SK-N-SH (cell line): ENCODE measurements at regions of chr20 and their contacts with region 1.

Region 1: DNA sequence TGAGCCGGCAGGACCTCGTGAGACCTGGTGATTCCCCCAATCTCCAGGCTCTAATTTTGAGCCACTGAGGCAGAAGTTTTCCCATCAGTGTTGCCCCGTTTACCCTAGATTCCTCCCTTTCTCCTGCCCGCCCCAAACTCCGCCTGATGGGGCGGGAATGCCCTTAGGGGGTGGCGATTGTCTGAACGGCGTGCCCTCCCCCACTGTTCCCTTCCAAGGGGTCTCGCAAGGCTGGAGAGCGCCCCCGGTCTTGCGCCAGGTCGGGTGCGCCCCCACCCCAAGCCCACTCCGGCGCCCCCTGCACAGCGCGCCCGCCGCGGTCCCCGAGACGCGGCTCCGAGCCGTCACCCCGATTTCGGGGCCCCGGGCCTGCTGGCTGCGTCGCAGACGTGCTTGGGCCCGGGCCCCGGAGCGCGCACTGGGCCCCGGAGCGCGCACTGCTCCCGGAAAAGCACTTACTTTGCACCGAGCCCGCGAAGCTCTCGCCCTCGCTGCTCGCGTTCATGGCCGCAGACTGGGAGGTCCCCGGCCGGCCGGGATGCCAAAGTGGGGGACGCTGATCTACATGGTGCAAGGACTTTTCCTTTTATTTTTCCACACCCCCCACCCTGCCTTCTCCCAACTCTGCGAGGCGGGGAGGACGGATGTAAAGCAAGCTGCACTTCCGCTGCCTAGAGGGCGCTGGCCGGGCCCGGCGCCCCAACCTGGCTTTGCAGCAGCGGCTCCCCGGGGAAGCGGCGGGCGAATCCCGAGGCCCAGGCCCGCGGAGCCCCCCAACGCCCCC is at the start of gene ZFP64:
- DNase-seq: peak; percentile 91
- H3K4me3 ChIP-seq: peak within 1 kb of the TSS; percentile 83 to 95
- H3K27ac ChIP-seq: peak within 1 kb of the TSS; percentile 78 to 96
- H3K4me1 ChIP-seq: peaks cover 5% of the 10 kb centered on the region in 2 experiments; a peak in 3 of 4 replicates
- H3K27me3 ChIP-seq: no peaks in the 10 kb centered on the region
- CTCF ChIP-seq: peak; percentile 70
- EP300 ChIP-seq: no peak
- RAD21 ChIP-seq: no peak
- polyA plus RNA-seq, gene ZFP64: 12.4 and 12.8 TPM in 2 replicates

Region 2: GRCh38 chr20:52172392-52173047 is 18.8 kb before region 1 on chr20:
- CTCF ChIA-PET with region 1: interaction called, 12 read pairs
- POLR2A ChIA-PET with region 1: interaction called, 3 read pairs
- DNase-seq: no peak
- H3K4me3 ChIP-seq: no peak overlapping the region
- H3K27ac ChIP-seq: no peak overlapping the region
- H3K4me1 ChIP-seq: no peaks in the 10 kb centered on the region
- H3K27me3 ChIP-seq: no peaks in the 10 kb centered on the region
- CTCF ChIP-seq: no peak
- EP300 ChIP-seq: no peak
- RAD21 ChIP-seq: no peak

Region 3: GRCh38 chr20:52204136-52204535 is 12.8 kb after region 1 on chr20:
- CTCF ChIA-PET with region 1: interaction called, 13 read pairs
- POLR2A ChIA-PET with region 1: no interaction called
- DNase-seq: no peak
- H3K4me3 ChIP-seq: no peak overlapping the region
- H3K27ac ChIP-seq: no peak overlapping the region
- H3K4me1 ChIP-seq: no peaks in the 10 kb centered on the region; a peak in 1 of 4 replicates
- H3K27me3 ChIP-seq: no peaks in the 10 kb centered on the region
- CTCF ChIP-seq: no peak
- EP300 ChIP-seq: no peak
- RAD21 ChIP-seq: no peak

Region 4: DNA sequence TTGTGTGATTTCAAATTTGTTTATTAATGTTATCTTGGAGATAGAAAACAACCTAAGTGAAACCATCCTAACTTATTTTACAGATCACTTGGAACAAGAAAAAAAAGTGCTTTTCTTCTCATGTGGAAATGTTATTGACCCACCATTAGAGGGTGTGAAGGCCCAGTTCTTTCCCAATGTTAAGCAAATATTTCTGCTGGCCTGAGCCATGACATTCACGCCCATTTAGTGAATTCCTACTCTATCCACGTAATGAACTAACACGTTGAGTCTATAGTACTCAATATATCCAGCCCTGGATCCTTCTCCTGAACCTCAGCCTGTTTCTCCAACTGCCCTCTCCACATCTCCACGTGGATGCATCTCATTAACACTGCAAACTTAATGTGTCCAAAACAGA is 180.8 kb after region 1 on chr20:
- CTCF ChIA-PET with region 1: no interaction called
- POLR2A ChIA-PET with region 1: no interaction called
- DNase-seq: no peak
- H3K4me3 ChIP-seq: no peak overlapping the region
- H3K27ac ChIP-seq: no peak overlapping the region
- H3K4me1 ChIP-seq: no peaks in the 10 kb centered on the region
- H3K27me3 ChIP-seq: no peaks in the 10 kb centered on the region
- CTCF ChIP-seq: no peak
- EP300 ChIP-seq: no peak
- RAD21 ChIP-seq: no peak